CD4-positive, alpha-beta memory T cell (primary cell): ENCODE measurements at regions of chr2 and their contacts with region 1.

Region 1: GRCh38 chr2:135531231-135532228 is at the start of gene R3HDM1:
- DNase-seq: peak in 4 of 5 donors; percentile 98 to 99 (median 98)
- H3K4me3 ChIP-seq: peak within 1 kb of the TSS; percentile 86 to 98
- H3K4me3 Mint-ChIP-seq: no peak within 1 kb of the TSS
- H3K27ac ChIP-seq: peak within 1 kb of the TSS; percentile 89
- H3K27ac Mint-ChIP-seq: peak within 1 kb of the TSS in 6 of 7 donors; percentile 59 to 91 (median 78)
- H3K4me1 ChIP-seq: peaks cover 29% of the 10 kb centered on the region
- H3K4me1 Mint-ChIP-seq: peaks cover 11 to 25% (median 18%) of the 10 kb centered on the region in 4 donors
- H3K27me3 ChIP-seq: no peaks in the 10 kb centered on the region
- H3K27me3 Mint-ChIP-seq: no peaks in the 10 kb centered on the region
- total RNA-seq, gene R3HDM1: 40.5 to 42.3 TPM

Region 2: DNA sequence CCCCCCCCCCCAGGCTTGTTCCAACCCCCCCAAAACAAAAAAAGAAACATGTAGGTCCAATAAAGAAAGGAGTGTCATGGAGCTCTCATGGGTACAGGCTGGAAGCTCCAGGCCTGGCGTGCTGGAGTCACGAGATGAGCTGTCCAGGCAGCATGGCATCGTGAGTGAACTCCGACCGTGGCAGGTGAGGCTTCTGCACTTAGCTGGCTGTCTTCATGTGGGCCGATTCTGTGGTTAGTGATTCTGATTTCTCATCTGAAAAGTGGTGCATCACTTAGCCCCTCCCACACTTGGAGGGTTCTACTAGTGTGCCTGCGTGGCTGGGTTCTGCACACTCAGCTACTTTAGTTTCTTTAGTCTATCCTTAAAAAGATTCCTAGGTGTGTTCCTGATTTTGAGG is 1404.0 kb before region 1 on chr2:
- CTCF ChIA-PET with region 1: no interaction called
- POLR2A ChIA-PET with region 1: no interaction called
- intact Hi-C with region 1: loop called (anchors 1 kb)
- DNase-seq: peak; percentile 21 to 59 (median 34)
- H3K4me3 ChIP-seq: no peak overlapping the region
- H3K4me3 Mint-ChIP-seq: peak overlapping the region in 7 of 8 donors; percentile 47 to 82 (median 63)
- H3K27ac ChIP-seq: no peak overlapping the region
- H3K27ac Mint-ChIP-seq: peak overlapping the region; percentile 12 to 85 (median 73)
- H3K4me1 ChIP-seq: peaks cover 82% of the 10 kb centered on the region
- H3K4me1 Mint-ChIP-seq: peaks cover 67 to 92% (median 80%) of the 10 kb centered on the region in 4 donors
- H3K27me3 ChIP-seq: no peaks in the 10 kb centered on the region
- H3K27me3 Mint-ChIP-seq: no peaks in the 10 kb centered on the region

Region 3: GRCh38 chr2:135004005-135004746 is 527.4 kb before region 1 on chr2:
- CTCF ChIA-PET with region 1: interaction called, 9 read pairs
- POLR2A ChIA-PET with region 1: no interaction called
- intact Hi-C with region 1: loop called (anchors 5 kb)
- DNase-seq: peak; percentile 48 to 67 (median 62)
- H3K4me3 ChIP-seq: no peak overlapping the region
- H3K4me3 Mint-ChIP-seq: peak overlapping the region in 3 of 8 donors; percentile 8 to 20 (median 17)
- H3K27ac ChIP-seq: no peak overlapping the region
- H3K27ac Mint-ChIP-seq: peak overlapping the region in 1 of 7 donors; percentile 52
- H3K4me1 ChIP-seq: no peaks in the 10 kb centered on the region
- H3K4me1 Mint-ChIP-seq: peaks cover 2 to 6% (median 5%) of the 10 kb centered on the region in 4 donors
- H3K27me3 ChIP-seq: no peaks in the 10 kb centered on the region
- H3K27me3 Mint-ChIP-seq: peaks cover 8 to 20% of the 10 kb centered on the region in 2 donors

Region 4: DNA sequence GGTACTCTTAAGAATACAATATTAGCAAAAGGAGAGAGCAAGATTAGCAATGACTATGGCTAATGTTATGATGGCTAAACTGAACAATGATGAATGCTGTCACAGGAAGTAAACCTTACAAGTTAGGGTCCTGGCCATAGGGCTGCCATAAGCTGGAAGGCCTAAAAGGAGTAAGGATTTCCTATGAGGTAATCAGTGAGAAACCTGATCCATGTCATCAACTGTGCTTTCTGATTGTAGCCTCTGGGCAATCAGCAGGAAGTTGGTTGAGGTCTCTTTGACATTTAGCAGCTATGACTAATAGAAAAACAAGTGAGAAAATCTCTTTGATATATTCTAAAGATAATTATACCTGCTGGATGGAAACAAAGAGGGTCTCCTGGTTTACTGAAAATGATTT is 286.5 kb before region 1 on chr2:
- CTCF ChIA-PET with region 1: no interaction called
- POLR2A ChIA-PET with region 1: no interaction called
- intact Hi-C with region 1: no loop called
- DNase-seq: no peak
- H3K4me3 ChIP-seq: no peak overlapping the region
- H3K4me3 Mint-ChIP-seq: no peak overlapping the region
- H3K27ac ChIP-seq: no peak overlapping the region
- H3K27ac Mint-ChIP-seq: no peak overlapping the region
- H3K4me1 ChIP-seq: no peaks in the 10 kb centered on the region
- H3K4me1 Mint-ChIP-seq: peaks cover 0 to 4% (median under 1%) of the 10 kb centered on the region in 4 donors
- H3K27me3 ChIP-seq: no peaks in the 10 kb centered on the region
- H3K27me3 Mint-ChIP-seq: no peaks in the 10 kb centered on the region

Region 5: GRCh38 chr2:135657806-135658582 is 126.5 kb after region 1 on chr2:
- CTCF ChIA-PET with region 1: no interaction called
- POLR2A ChIA-PET with region 1: interaction called, 6 read pairs
- intact Hi-C with region 1: loop called (anchors 5 kb)
- DNase-seq: peak; percentile 47 to 69 (median 55)
- H3K4me3 ChIP-seq: no peak overlapping the region
- H3K4me3 Mint-ChIP-seq: peak overlapping the region; percentile 72 to 85 (median 82)
- H3K27ac ChIP-seq: no peak overlapping the region
- H3K27ac Mint-ChIP-seq: peak overlapping the region; percentile 52 to 87 (median 76)
- H3K4me1 ChIP-seq: peaks cover 7% of the 10 kb centered on the region
- H3K4me1 Mint-ChIP-seq: peaks cover 6 to 11% (median 9%) of the 10 kb centered on the region in 4 donors
- H3K27me3 ChIP-seq: no peaks in the 10 kb centered on the region
- H3K27me3 Mint-ChIP-seq: no peaks in the 10 kb centered on the region

Region 6: DNA sequence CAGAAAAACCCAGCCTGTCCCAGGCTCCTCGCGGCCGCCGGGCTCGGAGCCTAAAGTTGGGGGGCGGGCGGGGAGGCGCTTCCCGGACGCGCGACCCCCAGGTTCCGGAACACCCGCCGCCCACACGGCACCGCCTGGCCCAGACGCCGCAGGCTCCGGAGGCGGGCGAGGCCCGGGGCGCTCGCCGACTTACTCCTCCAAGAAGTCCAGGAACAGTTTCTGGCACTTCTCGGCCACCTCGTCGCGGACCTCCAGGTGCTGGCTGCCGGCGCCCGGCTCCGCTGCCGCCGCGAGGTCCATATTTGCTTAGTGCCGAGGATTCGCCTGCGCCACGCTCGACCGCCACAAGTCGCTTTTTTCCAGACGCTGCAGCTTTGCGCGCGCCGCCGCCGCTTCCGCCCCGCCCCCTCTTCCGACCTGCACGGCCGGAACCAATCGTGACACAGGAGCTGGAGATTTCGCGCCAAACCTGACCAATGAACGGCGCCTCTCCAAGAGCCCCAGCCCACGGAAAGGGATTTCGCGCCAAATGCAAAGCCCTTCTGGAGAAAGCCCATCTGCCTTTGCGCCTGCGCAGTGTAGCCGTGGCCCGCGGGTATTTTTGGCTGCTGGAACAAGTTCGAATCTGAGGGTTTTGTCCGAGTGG is 344.7 kb after region 1 on chr2 and contains the start of gene MCM6:
- CTCF ChIA-PET with region 1: no interaction called
- POLR2A ChIA-PET with region 1: interaction called, 7 read pairs
- intact Hi-C with region 1: loop called (anchors 1 kb)
- DNase-seq: peak; percentile 97 to 98 (median 98)
- H3K4me3 ChIP-seq: peak within 1 kb of the TSS; percentile 82 to 84
- H3K4me3 Mint-ChIP-seq: peak within 1 kb of the TSS; percentile 81 to 96 (median 95)
- H3K27ac ChIP-seq: peak within 1 kb of the TSS; percentile 80
- H3K27ac Mint-ChIP-seq: peak within 1 kb of the TSS; percentile 94 to 97 (median 95)
- H3K4me1 ChIP-seq: peaks cover 31% of the 10 kb centered on the region
- H3K4me1 Mint-ChIP-seq: peaks cover 27 to 47% (median 37%) of the 10 kb centered on the region in 4 donors
- H3K27me3 ChIP-seq: no peaks in the 10 kb centered on the region
- H3K27me3 Mint-ChIP-seq: peaks cover 0 to 1% of the 10 kb centered on the region in 2 donors
- total RNA-seq, gene MCM6: 31.2 to 32.7 TPM